HEK293 (cell line): ENCODE measurements at regions of chr7 and their contacts with region 1.

Region 1: DNA sequence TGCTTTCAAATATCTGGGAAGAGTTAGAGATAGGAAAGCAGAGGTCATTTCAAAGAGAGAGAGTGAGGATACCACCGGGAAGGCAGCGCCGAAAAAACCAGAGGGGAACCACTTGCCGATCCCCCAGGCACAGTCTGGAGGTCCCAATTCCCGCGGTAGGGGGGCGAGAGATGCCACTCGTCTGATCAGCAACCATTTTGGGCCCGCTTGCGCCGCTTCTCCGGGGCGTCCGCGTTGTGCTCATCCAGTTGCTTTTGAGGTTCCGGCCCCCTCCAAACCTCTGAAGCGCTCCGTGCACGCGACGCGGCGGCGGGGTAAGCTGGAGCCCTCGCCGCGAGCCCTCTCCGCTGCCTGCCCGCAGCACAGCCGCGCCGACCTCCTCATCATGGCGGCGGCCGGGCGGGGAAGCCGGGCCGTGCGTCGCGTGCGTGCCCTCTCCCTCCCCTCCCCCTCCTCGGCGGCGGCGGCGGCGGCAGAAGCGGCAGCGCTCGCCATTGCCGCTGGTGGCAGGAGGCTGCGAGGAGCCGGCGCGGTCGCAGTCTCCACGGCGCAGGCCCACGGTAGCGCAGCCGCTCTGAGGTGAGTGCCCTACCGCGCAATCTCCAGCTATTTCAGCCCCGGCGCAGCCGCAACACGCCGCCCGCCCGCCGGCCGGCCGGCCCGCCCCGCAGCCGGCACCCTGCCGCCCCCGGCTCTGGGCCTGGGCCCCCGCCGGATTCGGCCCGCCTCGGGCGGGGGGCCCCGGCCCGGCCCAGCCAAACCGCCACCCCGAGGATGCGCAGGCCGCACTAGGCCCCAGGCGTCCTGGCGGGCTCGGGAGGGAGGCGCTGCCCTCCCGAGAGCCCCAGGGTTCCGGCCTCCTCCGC is at the start of gene NRF1:
- H3K4me3 ChIP-seq: peak within 1 kb of the TSS; percentile 96
- H3K27ac ChIP-seq: peak within 1 kb of the TSS; percentile 97
- H3K4me1 ChIP-seq: peaks cover 23% of the 10 kb centered on the region
- CTCF ChIP-seq: no peak

Region 2: GRCh38 chr7:129635300-129636029 is 24.0 kb after region 1 on chr7:
- CTCF ChIA-PET with region 1: interaction called, 11 read pairs
- POLR2A ChIA-PET with region 1: interaction called, 3 read pairs
- H3K4me3 ChIP-seq: no peak overlapping the region
- H3K27ac ChIP-seq: no peak overlapping the region
- H3K4me1 ChIP-seq: peaks cover 6% of the 10 kb centered on the region; the same call in 1 of the 2 replicates
- CTCF ChIP-seq: peak; percentile 59; the same call in 1 of the 2 replicates

Region 3: GRCh38 chr7:129644634-129645230 is 33.3 kb after region 1 on chr7:
- CTCF ChIA-PET with region 1: interaction called, 13 read pairs
- POLR2A ChIA-PET with region 1: no interaction called
- H3K4me3 ChIP-seq: no peak overlapping the region
- H3K27ac ChIP-seq: no peak overlapping the region
- H3K4me1 ChIP-seq: 0 out of 2 replicates have a peak, but pooled peaks cover 5% of the 10 kb centered on the region
- CTCF ChIP-seq: no peak